ENCODE measurements at regions of chr2 and their contacts with region 1.

Region 1: DNA sequence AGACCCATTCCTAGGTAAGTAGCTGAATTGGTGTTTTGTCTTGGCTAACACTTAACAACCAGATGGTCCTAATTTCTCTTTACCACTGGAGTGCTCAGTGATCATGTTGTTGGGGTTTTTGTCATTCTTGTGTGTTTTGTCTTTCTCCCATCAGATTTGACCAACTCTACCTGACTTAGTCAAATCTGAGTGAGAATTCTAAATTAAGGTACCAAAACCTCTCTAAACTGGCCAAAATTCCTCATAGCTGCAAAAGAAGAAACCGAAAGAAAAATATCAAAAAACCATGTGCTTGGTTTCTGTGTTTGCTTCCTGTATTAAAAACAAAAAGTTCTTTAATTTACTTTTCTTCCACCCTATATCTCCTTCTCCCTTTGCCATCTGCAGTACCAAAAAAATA is 350.7 kb upstream of the SPHKAP start:
- DNase-seq: no peak
- H3K4me3 Mint-ChIP-seq: no peak overlapping the region
- H3K27ac Mint-ChIP-seq: no peak overlapping the region
- H3K4me1 Mint-ChIP-seq: no peaks in the 10 kb centered on the region
- H3K27me3 Mint-ChIP-seq: no peaks in the 10 kb centered on the region

Region 2: GRCh38 chr2:227805578-227805977 is 726.7 kb before region 1 on chr2:
- CTCF ChIA-PET with region 1: no interaction called
- POLR2A ChIA-PET with region 1: interaction called, 11 read pairs
- DNase-seq: no peak
- H3K4me3 Mint-ChIP-seq: peak overlapping the region; percentile 44
- H3K27ac Mint-ChIP-seq: peak overlapping the region; percentile 63
- H3K4me1 Mint-ChIP-seq: peaks cover 9% of the 10 kb centered on the region
- H3K27me3 Mint-ChIP-seq: peaks cover 3% of the 10 kb centered on the region

Region 3: GRCh38 chr2:228556717-228557116 is 24.5 kb after region 1 on chr2:
- CTCF ChIA-PET with region 1: no interaction called
- POLR2A ChIA-PET with region 1: no interaction called
- DNase-seq: no peak
- H3K4me3 Mint-ChIP-seq: no peak overlapping the region
- H3K27ac Mint-ChIP-seq: no peak overlapping the region
- H3K4me1 Mint-ChIP-seq: no peaks in the 10 kb centered on the region
- H3K27me3 Mint-ChIP-seq: no peaks in the 10 kb centered on the region

Measured in activated CD4-positive, alpha-beta T cell treated with anti-CD3 and anti-CD28 coated beads, Interleukin-2, amount 10 ng/mL, durations not matched to agents 7 days and 5 days (primary cell).